ENCODE measurements at regions of chr13 and their contacts with region 1.

Region 1: GRCh38 chr13:26985285-26985878 is 186.2 kb downstream of the USP12 start:
- DNase-seq: peak; percentile 44

Region 2: DNA sequence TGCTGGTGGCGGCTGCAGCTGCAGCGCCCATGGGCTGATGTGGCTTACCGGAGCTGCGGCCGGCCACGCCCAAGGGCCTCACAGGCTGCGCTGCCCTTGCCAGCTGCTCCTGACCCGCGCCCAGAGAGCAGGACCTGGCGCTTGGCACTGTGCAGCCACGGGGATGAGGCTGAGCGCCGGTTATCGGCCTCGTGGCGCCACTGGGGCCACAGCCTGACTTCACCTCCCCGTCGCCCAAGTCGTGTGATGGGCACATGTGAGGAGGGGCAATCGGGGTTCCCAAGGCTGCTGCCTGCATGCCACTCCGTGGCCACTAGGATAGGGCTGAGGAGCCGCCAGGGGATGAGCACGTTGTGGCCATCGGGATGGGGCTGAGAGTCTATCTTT is 1966.7 kb before region 1 on chr13:
- intact Hi-C with region 1: no loop called
- DNase-seq: no peak

Region 3: DNA sequence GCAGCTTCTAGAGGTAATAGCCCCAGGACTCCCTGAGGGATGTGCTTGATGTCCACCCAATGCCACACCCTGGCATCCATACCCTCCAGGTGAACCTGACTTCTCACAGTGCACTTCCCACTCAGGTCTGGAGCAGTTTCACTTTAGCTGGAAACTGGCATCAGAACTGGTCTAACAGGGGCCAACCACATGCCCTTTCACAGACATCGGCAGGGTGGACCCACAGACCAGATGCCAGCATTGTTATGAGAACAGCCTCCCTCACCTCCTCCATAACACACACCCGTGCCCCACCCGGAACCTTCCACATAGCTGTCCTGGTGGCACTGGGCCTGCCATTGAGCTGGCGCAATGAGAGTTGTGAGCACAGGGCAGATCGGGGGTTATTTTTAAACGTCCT is 147.4 kb before region 1 on chr13:
- intact Hi-C with region 1: no loop called
- DNase-seq: no peak

Region 4: DNA sequence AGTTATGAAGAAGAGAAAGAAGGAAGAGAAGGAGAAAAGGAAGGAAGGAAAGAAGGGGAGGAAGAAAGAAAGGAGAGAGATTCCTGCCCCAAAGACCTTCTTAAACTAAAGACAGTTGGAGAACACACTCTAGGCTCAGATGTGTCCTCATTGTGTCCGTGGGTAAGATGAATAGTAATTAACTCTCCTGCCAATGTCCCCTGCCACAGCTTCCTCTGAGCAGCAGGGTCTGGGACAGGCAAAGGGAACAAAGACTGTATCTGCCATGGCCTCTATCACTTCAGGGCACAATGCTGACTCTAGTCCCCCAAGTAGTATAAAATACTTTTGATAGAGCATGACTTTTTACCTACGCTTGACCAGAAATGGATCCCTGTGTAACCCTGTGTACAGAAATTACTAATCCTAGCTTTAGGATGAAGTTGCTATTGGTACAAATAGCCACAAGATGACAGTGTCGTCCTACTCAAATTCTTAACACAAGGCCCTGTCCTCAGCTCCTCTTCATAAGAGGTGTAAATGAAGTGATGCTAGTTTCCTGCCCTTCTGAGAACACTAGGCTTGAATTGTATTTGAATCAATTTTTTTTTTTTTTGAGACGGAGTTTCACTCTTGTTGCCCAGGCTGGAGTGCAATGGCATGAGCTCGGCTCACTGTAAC is 38.6 kb before region 1 on chr13:
- intact Hi-C with region 1: loop called (anchors 5 kb)
- DNase-seq: no peak

Region 5: GRCh38 chr13:27022571-27023311 is 37.4 kb after region 1 on chr13:
- intact Hi-C with region 1: no loop called
- DNase-seq: no peak

Region 6: DNA sequence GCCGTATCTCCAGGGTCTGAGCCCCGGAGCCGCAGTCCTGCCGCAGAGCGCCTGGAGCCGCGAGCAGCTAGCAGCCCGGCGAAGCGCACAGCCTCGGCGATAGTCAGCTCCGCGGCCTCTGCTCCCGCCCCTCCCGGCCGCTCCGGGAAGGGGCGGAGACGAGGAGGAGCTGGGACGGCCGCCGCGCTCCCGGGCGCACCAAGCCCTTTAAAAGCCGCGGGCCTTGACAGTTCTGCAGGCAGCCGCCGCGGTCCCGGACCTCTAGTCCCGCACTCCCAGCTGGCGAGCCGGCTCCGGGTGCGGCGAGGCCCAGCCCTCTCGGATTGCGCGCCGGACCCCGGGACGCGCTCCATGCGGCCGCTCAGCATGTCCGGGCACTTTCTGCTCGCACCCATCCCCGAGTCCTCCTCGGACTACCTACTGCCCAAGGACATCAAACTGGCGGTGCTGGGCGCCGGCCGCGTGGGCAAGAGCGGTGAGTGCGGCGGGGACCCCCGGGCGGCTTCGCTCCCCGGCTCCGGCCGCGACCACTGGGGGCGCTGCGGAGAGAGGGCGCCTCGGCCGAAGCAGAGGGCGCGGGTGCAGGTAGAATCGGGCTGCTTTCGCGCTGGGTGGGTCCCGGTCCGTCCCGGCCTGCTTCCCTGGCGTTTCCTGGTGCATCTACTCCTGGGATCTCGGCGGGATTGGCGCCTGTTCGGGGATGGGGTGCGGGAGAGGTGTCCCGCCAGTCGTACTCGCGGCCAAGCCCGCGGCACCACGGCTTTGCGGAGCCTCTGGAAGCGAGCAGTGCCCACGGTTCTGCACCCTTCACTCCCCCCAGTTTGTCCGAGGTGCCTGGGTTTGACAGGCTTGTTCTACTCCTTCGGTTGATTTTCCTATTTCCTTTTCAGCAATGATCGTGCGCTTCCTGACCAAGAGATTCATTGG is 285.5 kb after region 1 on chr13 and contains the start of gene RASL11A:
- intact Hi-C with region 1: loop called (anchors 5 kb)
- DNase-seq: peak; percentile 90
- total RNA-seq, gene RASL11A: 4.7 TPM

Region 7: GRCh38 chr13:27362064-27362883 is 376.9 kb after region 1 on chr13:
- intact Hi-C with region 1: loop called (anchors 2 kb)
- DNase-seq: peak; percentile 93

Region 8: DNA sequence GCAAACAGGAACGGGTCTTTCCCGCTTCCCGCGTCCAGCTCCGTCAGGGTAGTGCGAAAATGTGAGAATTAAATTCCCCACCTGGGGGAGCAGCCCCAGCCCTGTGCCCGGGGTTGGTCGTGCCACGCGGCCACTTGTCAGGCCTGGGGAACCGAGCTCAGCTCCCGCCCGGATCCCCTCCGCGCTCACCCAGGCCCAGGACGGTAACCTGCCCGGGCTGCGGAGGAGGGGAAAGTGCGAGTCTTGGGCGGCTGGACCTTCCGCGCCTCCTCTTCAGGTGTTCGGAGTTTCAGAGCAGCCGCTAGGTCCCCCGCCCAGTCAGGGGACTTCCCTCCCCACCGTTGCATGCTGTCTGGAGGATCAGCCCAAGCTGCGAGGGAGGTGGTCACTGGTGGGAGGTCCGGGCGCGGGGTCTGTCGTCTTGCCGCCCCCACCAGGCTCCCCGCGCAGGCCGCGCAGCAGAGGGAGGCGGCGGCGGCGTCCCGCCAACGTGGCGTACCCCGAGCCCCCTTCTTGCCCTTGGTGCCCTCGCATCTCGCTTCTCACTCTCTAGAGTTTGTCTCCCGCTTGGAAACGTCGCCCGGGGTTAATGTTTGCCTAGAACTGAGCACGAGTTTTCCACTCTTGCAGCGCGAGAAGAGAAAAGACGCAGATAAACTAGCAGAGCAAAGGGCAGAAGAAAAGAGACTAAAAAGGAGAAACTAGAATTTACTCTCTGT is 995.1 kb after region 1 on chr13:
- intact Hi-C with region 1: loop called (anchors 10 kb)
- DNase-seq: peak; percentile 47

Measured in cardiac septum (tissue), 1 donor.